Activated T-helper 1 cell treated with anti-CD3 and anti-CD28 coated beads, Interleukin-12 subunit alpha, Interleukin-12 subunit beta, Interleukin-2, Interleukin-4 antibody, amounts not matched to agents 30 ng/mL and 10 ng/mL and 1 ng/mL, durations not matched to agents 14 hours and 24 hours and 36 hours (primary cell): ENCODE measurements at regions of chr1 and their contacts with region 1.

Region 1: DNA sequence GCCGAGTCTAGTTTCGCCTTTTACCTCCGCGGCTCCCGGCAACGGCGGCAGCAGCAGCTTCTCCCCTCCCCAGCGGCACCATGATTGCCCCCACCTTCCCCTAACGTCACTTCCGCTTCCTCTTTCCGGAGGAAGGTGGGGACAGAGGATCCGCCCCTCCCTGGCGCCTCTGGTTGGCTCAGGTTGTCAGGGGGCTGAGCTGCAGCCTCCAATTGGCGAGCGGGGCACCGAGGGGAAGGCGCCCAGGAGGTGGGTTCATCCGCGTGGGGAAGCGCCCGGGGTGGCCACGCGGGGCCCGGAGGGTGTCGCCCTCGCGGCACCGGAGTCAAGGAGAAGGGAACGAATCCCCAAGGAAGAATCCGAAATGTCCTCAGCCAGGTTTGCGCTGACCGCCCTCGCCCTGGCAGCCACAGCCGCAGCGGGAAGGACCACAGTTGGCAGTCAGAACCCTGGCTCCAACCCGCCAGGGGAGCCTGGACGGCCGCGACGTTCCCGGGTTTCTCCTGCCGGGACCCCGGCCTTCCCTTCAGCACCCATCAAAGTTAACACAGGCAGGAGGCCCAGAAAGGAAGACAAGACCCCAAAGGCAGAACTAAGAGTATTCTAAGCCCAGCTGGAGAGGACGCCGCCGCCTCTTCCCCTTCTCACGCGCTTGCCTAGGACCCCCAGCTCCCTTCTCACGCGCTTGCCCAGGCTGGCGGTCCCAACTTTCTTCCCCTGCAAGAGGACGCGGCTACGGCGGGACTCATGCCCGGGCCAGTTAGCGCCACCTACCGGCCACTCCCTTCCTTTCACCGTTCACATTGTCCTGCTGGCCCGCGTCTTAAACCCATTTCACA is at the start of gene MTF1:
- DNase-seq: peak; percentile 96
- H3K4me3 Mint-ChIP-seq: peak within 1 kb of the TSS; percentile 95
- H3K27ac Mint-ChIP-seq: peak within 1 kb of the TSS; percentile 99
- H3K4me1 Mint-ChIP-seq: peaks cover 31% of the 10 kb centered on the region
- H3K27me3 Mint-ChIP-seq: no peaks in the 10 kb centered on the region
- total RNA-seq, gene MTF1: 31.7 and 35.3 TPM in 2 replicates

Region 2: GRCh38 chr1:37479255-37480124 is 380.2 kb before region 1 on chr1:
- intact Hi-C with region 1: loop called (anchors 5 kb)
- DNase-seq: peak; percentile 84
- H3K4me3 Mint-ChIP-seq: peak overlapping the region; percentile 100
- H3K27ac Mint-ChIP-seq: peak overlapping the region; percentile 97
- H3K4me1 Mint-ChIP-seq: peaks cover 42% of the 10 kb centered on the region
- H3K27me3 Mint-ChIP-seq: peaks cover 2% of the 10 kb centered on the region

Region 3: GRCh38 chr1:37931361-37932158 is 71.8 kb after region 1 on chr1:
- intact Hi-C with region 1: loop called (anchors 2 kb)
- DNase-seq: peak; percentile 96
- H3K4me3 Mint-ChIP-seq: peak overlapping the region; percentile 95
- H3K27ac Mint-ChIP-seq: peak overlapping the region; percentile 81
- H3K4me1 Mint-ChIP-seq: peaks cover 28% of the 10 kb centered on the region
- H3K27me3 Mint-ChIP-seq: no peaks in the 10 kb centered on the region

Region 4: DNA sequence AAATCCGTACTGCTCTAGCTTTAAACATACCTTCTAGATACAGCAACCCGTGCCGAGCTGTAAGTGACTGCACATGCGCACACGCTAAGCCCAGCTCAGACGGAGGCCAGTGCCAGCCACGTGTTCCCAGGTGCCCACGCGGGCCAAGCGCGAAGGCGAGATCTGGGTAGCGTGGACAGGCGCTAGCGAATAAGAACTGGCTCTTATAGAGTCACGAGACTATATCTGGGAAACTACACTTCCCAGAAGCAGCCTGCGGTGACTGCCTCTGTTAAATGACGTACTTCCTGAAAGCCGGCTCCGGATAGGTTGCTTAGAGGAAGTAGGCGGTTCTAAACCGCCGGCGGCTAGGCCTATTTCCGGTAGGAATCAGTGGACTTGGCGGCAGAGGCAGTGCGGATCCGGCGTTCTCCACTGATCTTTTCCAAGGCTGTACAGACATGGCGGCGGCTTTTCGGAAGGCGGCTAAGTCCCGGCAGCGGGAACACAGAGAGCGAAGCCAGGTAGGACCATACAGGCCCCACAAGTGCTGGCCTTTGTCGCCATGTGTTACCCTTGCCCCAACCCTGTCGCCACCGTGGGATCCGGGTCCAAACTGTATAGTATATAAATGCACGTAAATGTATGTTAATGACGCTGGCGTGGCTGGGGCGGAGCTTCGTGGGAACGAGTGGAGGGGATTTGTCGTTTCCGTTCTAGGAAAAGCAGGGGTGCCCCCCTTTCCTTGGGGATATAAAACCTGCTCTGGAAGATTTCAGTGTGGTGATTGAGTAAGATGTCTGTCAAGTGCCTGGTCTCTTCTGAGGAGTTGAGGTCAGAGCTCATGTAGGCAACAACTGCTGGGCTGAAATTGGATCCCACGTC is 152.9 kb after region 1 on chr1 and contains the start of gene UTP11:
- intact Hi-C with region 1: loop called (anchors 10 kb)
- DNase-seq: peak; percentile 87
- H3K4me3 Mint-ChIP-seq: peak within 1 kb of the TSS; percentile 96
- H3K27ac Mint-ChIP-seq: peak within 1 kb of the TSS; percentile 93
- H3K4me1 Mint-ChIP-seq: peaks cover 54% of the 10 kb centered on the region
- H3K27me3 Mint-ChIP-seq: no peaks in the 10 kb centered on the region
- total RNA-seq, gene UTP11: 106 and 108 TPM in 2 replicates